B cell (primary cell): ENCODE measurements at regions of chr3 and their contacts with region 1.

Region 1: GRCh38 chr3:186783073-186783730 is at the start of gene EIF4A2:
- DNase-seq: peak; percentile 97
- ATAC-seq: peak; percentile 77
- H3K4me3 ChIP-seq: peak within 1 kb of the TSS; percentile 80 to 100 (median 90)
- H3K4me3 Mint-ChIP-seq: peak within 1 kb of the TSS; percentile 97
- H3K27ac ChIP-seq: peak within 1 kb of the TSS; percentile 97 to 98
- H3K27ac Mint-ChIP-seq: peak within 1 kb of the TSS; percentile 99
- H3K4me1 ChIP-seq: peaks cover 37 to 40% of the 10 kb centered on the region in 2 donors
- H3K4me1 Mint-ChIP-seq: peaks cover 52% of the 10 kb centered on the region
- H3K27me3 ChIP-seq: no peaks in the 10 kb centered on the region
- H3K27me3 Mint-ChIP-seq: no peaks in the 10 kb centered on the region
- CTCF ChIP-seq: no peak
- total RNA-seq, gene EIF4A2: 490 and 506 TPM in 2 replicates

Region 2: DNA sequence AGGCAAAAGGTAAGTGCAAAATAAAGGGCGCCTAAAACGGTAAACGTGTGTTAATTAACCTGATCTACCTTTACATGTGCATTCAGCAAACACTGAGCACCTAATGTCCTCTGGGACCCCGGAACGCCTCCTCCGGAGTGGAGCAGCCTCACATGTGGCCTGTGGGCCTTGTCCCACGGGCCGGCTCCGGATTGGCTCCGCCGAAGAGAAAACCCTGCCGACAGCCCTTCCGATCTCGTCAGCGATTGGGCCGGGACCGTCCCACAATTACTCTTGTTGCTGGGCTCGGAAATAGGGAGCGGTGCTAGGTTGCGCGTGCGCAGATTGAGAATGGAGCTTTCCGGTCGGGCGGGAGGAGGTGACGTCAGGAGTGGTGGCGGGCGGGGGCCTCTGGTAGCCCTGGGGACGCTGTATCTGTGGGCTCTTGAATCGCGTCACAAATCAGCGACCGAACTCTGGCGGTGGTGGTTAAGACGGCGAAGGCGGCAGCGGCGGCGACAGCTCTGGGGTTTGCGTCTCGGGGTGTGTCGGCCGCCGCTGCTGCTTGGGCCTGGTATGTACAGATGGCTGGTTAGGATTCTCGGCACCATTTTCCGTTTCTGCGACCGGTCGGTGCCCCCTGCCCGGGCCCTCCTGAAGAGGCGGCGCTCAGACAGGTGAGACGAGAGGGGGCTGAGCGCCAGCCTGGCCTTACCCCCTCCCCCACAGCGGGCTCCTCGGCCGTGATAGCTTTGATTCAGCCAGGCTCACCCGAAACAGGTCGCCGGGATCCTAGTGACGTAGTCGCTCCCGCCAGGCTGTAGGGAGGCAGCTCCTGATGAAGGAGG is 1197.1 kb before region 1 on chr3 and contains the start of gene SENP2:
- CTCF ChIA-PET with region 1: no interaction called
- POLR2A ChIA-PET with region 1: no interaction called
- intact Hi-C with region 1: loop called (anchors 10 kb)
- DNase-seq: peak; percentile 100
- ATAC-seq: peak; percentile 95
- H3K4me3 ChIP-seq: peak within 1 kb of the TSS; percentile 81 to 98 (median 93)
- H3K4me3 Mint-ChIP-seq: peak within 1 kb of the TSS; percentile 86
- H3K27ac ChIP-seq: peak within 1 kb of the TSS; percentile 92 to 96
- H3K27ac Mint-ChIP-seq: peak within 1 kb of the TSS; percentile 93
- H3K4me1 ChIP-seq: peaks cover 20 to 37% of the 10 kb centered on the region in 2 donors
- H3K4me1 Mint-ChIP-seq: peaks cover 27% of the 10 kb centered on the region
- H3K27me3 ChIP-seq: no peaks in the 10 kb centered on the region
- H3K27me3 Mint-ChIP-seq: no peaks in the 10 kb centered on the region
- CTCF ChIP-seq: no peak
- total RNA-seq, gene SENP2: 43.4 and 46.0 TPM in 2 replicates

Region 3: DNA sequence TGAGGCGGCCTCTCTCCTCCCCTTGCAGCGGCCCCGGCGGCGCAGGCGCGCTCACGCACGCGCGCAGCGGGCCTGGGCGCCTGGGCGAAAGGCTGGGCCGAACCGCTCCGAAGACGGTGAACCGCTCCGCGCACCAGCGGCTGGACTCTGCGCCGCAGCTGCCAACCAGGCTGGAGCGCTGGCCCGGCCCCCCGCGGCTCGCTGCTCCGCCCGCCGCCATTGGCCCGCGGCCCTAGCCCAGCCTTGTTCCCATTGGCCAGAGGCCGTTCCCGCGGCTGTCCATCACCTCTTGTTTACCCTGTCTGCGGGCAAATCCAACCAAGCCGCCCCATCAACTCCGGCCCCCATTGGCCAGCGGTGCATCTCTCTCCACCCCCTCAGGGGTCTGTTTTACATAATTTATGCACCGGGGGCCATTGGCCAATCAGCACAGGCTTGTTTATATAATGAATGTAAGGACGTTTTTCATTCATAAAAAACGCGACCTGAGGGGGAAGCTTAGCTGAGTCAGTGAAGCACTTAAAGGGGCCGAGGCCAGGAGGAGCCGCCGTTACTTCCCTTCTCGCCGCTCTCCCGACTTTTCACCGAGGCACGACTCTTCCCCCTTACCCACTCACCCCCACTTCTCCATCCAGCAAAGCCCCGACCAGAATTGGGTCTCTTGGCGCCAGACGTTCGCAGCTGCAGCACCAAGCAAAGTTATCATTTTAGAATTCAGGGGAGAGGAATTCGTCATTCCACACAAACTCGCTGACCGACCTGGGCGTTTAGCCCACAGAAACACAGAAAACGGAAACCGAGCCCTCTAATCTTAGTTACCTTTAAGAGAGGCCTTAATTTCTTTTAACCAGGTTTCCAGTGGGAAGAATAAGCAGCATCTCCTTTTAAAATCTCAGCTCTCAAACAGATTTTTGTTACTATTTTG is 674.0 kb before region 1 on chr3 and contains the start of gene ETV5:
- CTCF ChIA-PET with region 1: no interaction called
- POLR2A ChIA-PET with region 1: interaction called, 4 read pairs
- intact Hi-C with region 1: loop called (anchors 5 kb)
- DNase-seq: peak; percentile 95
- ATAC-seq: peak; percentile 93
- H3K4me3 ChIP-seq: peak within 1 kb of the TSS; percentile 51 to 73 (median 63)
- H3K4me3 Mint-ChIP-seq: peak within 1 kb of the TSS; percentile 96
- H3K27ac ChIP-seq: no peak within 1 kb of the TSS
- H3K27ac Mint-ChIP-seq: peak within 1 kb of the TSS; percentile 71
- H3K4me1 ChIP-seq: peaks cover 32 to 41% of the 10 kb centered on the region in 2 donors
- H3K4me1 Mint-ChIP-seq: peaks cover 38% of the 10 kb centered on the region
- H3K27me3 ChIP-seq: peaks cover 2 to 79% (median 41%) of the 10 kb centered on the region in 4 experiments
- H3K27me3 Mint-ChIP-seq: peaks cover 51% of the 10 kb centered on the region
- CTCF ChIP-seq: no peak
- total RNA-seq, gene ETV5: 0.10 and 0.74 TPM in 2 replicates

Region 4: GRCh38 chr3:186653080-186653707 is 130.0 kb before region 1 on chr3:
- CTCF ChIA-PET with region 1: no interaction called
- POLR2A ChIA-PET with region 1: interaction called, 13 read pairs
- intact Hi-C with region 1: loop called (anchors 10 kb)
- DNase-seq: peak; percentile 76
- ATAC-seq: peak; percentile 95
- H3K4me3 ChIP-seq: peak overlapping the region in 1 of 5 experiments; percentile 33
- H3K4me3 Mint-ChIP-seq: peak overlapping the region; percentile 69
- H3K27ac ChIP-seq: peak overlapping the region; percentile 34 to 86
- H3K27ac Mint-ChIP-seq: peak overlapping the region; percentile 92
- H3K4me1 ChIP-seq: peaks cover 28 to 29% of the 10 kb centered on the region in 2 donors
- H3K4me1 Mint-ChIP-seq: peaks cover 26% of the 10 kb centered on the region
- H3K27me3 ChIP-seq: no peaks in the 10 kb centered on the region
- H3K27me3 Mint-ChIP-seq: no peaks in the 10 kb centered on the region
- CTCF ChIP-seq: no peak

Region 5: GRCh38 chr3:186806089-186807055 is 23.2 kb after region 1 on chr3 and contains the start of gene RFC4:
- CTCF ChIA-PET with region 1: interaction called, 3 read pairs
- POLR2A ChIA-PET with region 1: interaction called, 16 read pairs
- intact Hi-C with region 1: loop called (anchors 1 kb)
- DNase-seq: peak; percentile 88
- ATAC-seq: peak; percentile 91
- H3K4me3 ChIP-seq: peak within 1 kb of the TSS; percentile 78 to 96 (median 90)
- H3K4me3 Mint-ChIP-seq: peak within 1 kb of the TSS; percentile 99
- H3K27ac ChIP-seq: peak within 1 kb of the TSS; percentile 78 to 86
- H3K27ac Mint-ChIP-seq: peak within 1 kb of the TSS; percentile 97
- H3K4me1 ChIP-seq: peaks cover 15 to 19% of the 10 kb centered on the region in 2 donors
- H3K4me1 Mint-ChIP-seq: peaks cover 20% of the 10 kb centered on the region
- H3K27me3 ChIP-seq: no peaks in the 10 kb centered on the region
- H3K27me3 Mint-ChIP-seq: no peaks in the 10 kb centered on the region
- CTCF ChIP-seq: no peak
- total RNA-seq, gene RFC4: 17.8 and 21.0 TPM in 2 replicates

Region 6: DNA sequence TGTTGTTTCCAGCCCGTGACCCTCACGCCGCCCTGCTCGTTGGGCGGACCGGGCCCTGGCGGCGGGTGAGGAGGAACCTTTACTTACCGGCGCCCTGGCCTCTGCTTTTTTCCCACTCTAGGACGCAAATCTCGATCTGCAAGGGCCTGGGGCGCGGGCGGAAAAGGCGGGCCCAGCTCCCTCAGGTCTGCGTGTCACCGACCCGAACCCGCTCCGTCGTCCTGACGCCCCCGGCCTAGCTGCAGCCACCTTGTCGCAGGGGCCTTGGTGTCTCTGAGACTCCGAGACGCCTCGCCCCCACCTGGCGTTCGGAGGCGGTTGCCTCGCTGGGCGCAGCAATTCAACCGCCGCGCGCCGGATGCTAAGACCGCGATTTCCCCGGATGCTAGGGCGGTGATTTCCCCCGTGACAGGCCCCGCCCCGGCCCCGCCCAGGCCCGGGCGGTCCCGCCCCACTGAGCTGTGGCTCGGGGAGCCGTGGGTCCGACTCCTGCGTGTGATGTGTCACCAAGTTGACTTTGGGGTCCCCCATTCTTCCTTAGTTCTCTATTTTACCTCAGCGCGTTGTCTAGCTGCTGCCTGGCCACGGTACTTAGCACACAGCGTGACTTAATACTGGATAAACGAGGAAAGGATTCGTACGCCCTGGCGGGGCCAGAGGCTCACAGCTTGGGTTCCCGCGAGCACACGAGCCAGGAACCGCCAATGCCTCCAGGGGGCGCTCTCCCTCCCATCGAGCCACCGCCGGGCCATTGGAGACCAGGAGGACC is 356.1 kb after region 1 on chr3 and contains the start of gene RPL39L:
- CTCF ChIA-PET with region 1: interaction called, 3 read pairs
- POLR2A ChIA-PET with region 1: interaction called, 8 read pairs
- intact Hi-C with region 1: loop called (anchors 2 kb)
- DNase-seq: peak; percentile 95
- ATAC-seq: peak; percentile 95
- H3K4me3 ChIP-seq: peak within 1 kb of the TSS in 4 of 5 experiments; percentile 49 to 68 (median 58)
- H3K4me3 Mint-ChIP-seq: peak within 1 kb of the TSS; percentile 90
- H3K27ac ChIP-seq: peak within 1 kb of the TSS; percentile 77 to 79
- H3K27ac Mint-ChIP-seq: peak within 1 kb of the TSS; percentile 90
- H3K4me1 ChIP-seq: peaks cover 12 to 14% of the 10 kb centered on the region in 2 donors
- H3K4me1 Mint-ChIP-seq: peaks cover 16% of the 10 kb centered on the region
- H3K27me3 ChIP-seq: no peaks in the 10 kb centered on the region
- H3K27me3 Mint-ChIP-seq: no peaks in the 10 kb centered on the region
- CTCF ChIP-seq: peak; percentile 79
- total RNA-seq, gene RPL39L: 2.0 and 3.1 TPM in 2 replicates